PC-3 (cell line): ENCODE measurements at regions of chr4 and their contacts with region 1.

Region 1: GRCh38 chr4:72701987-72702819 is 133.2 kb upstream of the ADAMTS3 start:
- DNase-seq: peak; percentile 80
- ATAC-seq: peak; percentile 86
- H3K4me3 ChIP-seq: peak overlapping the region; percentile 72
- H3K27ac ChIP-seq: no peak overlapping the region
- H3K4me1 ChIP-seq: no peaks in the 10 kb centered on the region
- H3K27me3 ChIP-seq: 0 out of 2 replicates have a peak, but pooled peaks cover 3% of the 10 kb centered on the region
- CTCF ChIP-seq: peak; percentile 95

Region 2: DNA sequence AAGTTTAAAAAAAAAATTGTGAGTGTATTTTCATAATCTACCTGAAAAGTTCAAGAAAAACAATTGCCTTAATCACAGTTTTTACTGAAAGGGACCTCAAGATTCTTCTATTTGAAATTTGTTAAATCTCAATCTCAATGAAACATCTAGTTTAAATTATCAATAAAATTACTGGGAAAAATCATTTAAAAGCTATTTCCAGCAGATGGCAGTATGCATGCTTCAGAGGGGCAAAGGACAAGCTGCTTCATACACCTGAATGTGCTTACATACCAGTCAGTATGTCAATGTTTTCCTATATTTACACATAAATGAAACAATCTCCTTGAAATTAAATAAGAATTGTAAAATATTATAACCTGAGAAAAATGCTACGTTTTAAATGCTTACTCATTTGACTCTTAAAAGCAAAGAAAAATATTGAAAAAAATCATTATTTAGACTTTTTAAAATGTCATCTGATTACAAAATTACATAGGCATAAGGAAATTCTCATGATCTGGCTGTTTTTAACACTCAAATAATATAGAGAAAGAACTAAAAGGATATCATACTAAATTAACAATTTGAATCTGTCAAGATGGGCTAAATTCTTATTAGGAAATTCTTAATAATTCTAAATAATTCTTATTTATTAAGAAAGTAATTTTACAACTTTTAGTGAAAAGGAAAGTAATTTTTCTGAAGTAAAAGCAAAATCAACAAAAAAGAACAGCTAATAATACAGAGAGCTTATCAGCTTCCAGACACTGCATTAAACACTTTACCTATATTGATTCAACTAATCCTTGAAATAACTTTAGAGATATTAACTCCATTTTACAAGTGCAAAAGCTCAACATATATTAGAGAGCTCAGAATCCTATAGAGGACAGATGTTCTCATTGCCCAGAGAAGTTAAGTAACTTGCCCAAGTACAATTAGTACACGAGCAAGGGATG is 375.2 kb before region 1 on chr4:
- CTCF ChIA-PET with region 1: interaction called, 5 read pairs
- POLR2A ChIA-PET with region 1: no interaction called
- intact Hi-C with region 1: loop called (anchors 10 kb)
- DNase-seq: peak; percentile 83
- ATAC-seq: peak; percentile 42; the same call in 1 of the 2 replicates
- H3K4me3 ChIP-seq: no peak overlapping the region
- H3K27ac ChIP-seq: no peak overlapping the region
- H3K4me1 ChIP-seq: peaks cover 18% of the 10 kb centered on the region
- H3K27me3 ChIP-seq: no peaks in the 10 kb centered on the region
- CTCF ChIP-seq: peak; percentile 89

Region 3: DNA sequence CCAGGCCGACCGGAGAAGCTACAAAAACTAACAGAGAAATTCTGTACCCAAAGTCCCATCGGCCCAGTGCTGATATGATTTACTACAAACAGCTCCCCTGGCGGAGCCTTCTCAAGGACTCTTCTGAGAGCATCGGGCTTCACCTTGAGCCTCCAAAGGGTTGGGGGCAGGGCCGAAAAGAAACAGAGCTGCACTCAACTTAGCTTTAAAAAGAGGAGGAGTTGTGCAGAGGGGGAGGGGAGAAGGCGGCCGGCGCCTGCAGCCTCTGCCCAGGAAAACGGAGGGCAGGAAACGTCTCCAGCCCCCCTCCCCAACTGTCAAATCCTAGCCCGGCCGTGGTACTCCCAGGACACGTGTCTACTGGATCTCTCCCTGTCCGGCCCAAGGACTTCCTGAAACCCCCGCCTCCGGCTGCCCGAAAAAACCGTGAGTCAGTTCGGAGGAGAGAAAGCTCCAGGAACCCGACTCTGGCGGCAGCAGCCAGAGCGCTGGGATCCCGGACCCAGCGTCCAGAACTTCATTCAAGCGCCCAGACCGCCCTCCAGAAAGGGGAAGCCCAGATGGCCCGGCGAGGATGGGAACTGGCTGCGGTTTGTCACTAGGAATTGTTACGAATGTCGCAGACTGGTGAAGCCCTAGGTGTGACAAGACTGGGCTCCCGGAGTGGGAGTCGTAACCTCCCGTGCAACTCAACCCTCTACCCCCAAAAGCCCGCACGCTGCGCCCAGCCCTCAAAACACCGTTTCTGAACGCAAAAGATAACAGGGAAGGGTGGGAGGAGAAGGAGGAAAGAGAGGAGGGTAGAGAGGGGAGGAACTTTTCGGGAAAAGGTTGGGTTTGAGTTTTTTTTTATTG is 134.2 kb before region 1 on chr4:
- CTCF ChIA-PET with region 1: interaction called, 6 read pairs
- POLR2A ChIA-PET with region 1: no interaction called
- intact Hi-C with region 1: loop called (anchors 2 kb)
- DNase-seq: peak; percentile 96
- ATAC-seq: peak; percentile 76
- H3K4me3 ChIP-seq: peak overlapping the region; percentile 92
- H3K27ac ChIP-seq: peak overlapping the region; percentile 77
- H3K4me1 ChIP-seq: peaks cover 36% of the 10 kb centered on the region
- H3K27me3 ChIP-seq: no peaks in the 10 kb centered on the region
- CTCF ChIP-seq: peak; percentile 66

Region 4: GRCh38 chr4:72779241-72779640 is 77.0 kb after region 1 on chr4:
- CTCF ChIA-PET with region 1: no interaction called
- POLR2A ChIA-PET with region 1: no interaction called
- intact Hi-C with region 1: no loop called
- DNase-seq: peak; percentile 40
- ATAC-seq: peak; percentile 42; the same call in 1 of the 2 replicates
- H3K4me3 ChIP-seq: no peak overlapping the region
- H3K27ac ChIP-seq: no peak overlapping the region
- H3K4me1 ChIP-seq: no peaks in the 10 kb centered on the region
- H3K27me3 ChIP-seq: peaks cover 40% of the 10 kb centered on the region
- CTCF ChIP-seq: no peak

Region 5: GRCh38 chr4:72909461-72909860 is 207.3 kb after region 1 on chr4:
- CTCF ChIA-PET with region 1: no interaction called
- POLR2A ChIA-PET with region 1: no interaction called
- intact Hi-C with region 1: loop called (anchors 2 kb)
- DNase-seq: peak; percentile 60
- ATAC-seq: peak; percentile 62; the same call in 1 of the 2 replicates
- H3K4me3 ChIP-seq: no peak overlapping the region
- H3K27ac ChIP-seq: no peak overlapping the region
- H3K4me1 ChIP-seq: no peaks in the 10 kb centered on the region
- H3K27me3 ChIP-seq: no peaks in the 10 kb centered on the region
- CTCF ChIP-seq: peak; percentile 75

Region 6: DNA sequence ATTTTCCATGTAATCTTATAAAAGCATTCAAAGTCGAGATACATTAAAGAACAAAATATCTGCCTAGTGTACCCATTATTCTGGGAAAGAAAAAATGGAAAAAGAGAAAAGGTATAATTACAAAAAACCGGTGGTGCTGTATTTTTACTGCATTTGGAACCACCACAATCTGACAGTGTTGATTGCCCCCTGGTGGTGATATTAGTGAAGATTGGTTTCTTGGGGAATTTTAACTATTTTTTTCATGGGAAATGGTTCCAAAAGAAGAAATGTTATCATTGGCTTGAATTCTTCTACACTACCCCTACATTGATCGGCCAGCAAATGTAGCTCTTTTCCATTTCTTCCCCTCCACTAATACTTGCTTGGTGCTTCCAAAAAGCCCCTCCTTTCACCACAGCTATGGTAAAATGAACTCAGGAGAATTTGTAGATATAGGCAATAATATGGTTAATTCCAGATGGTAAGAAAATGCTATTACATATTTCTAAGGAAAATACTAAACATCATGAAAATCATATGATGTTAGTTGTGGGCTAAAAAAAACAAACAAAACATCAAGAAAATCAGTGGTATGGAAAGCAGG is 317.4 kb after region 1 on chr4:
- CTCF ChIA-PET with region 1: no interaction called
- POLR2A ChIA-PET with region 1: no interaction called
- intact Hi-C with region 1: loop called (anchors 1 kb)
- DNase-seq: peak; percentile 78
- ATAC-seq: no peak
- H3K4me3 ChIP-seq: no peak overlapping the region
- H3K27ac ChIP-seq: no peak overlapping the region
- H3K4me1 ChIP-seq: no peaks in the 10 kb centered on the region
- H3K27me3 ChIP-seq: peaks cover 11% of the 10 kb centered on the region
- CTCF ChIP-seq: peak; percentile 95